ENCODE measurements at regions of chr14 and their contacts with region 1.

Region 1: GRCh38 chr14:104708606-104709268 is 15.3 kb upstream of the ADSS1 start:
- DNase-seq: peak; percentile 80
- H3K4me3 Mint-ChIP-seq: no peak overlapping the region
- H3K27ac Mint-ChIP-seq: no peak overlapping the region
- H3K4me1 Mint-ChIP-seq: peaks cover 2% of the 10 kb centered on the region
- H3K27me3 Mint-ChIP-seq: no peaks in the 10 kb centered on the region

Region 2: DNA sequence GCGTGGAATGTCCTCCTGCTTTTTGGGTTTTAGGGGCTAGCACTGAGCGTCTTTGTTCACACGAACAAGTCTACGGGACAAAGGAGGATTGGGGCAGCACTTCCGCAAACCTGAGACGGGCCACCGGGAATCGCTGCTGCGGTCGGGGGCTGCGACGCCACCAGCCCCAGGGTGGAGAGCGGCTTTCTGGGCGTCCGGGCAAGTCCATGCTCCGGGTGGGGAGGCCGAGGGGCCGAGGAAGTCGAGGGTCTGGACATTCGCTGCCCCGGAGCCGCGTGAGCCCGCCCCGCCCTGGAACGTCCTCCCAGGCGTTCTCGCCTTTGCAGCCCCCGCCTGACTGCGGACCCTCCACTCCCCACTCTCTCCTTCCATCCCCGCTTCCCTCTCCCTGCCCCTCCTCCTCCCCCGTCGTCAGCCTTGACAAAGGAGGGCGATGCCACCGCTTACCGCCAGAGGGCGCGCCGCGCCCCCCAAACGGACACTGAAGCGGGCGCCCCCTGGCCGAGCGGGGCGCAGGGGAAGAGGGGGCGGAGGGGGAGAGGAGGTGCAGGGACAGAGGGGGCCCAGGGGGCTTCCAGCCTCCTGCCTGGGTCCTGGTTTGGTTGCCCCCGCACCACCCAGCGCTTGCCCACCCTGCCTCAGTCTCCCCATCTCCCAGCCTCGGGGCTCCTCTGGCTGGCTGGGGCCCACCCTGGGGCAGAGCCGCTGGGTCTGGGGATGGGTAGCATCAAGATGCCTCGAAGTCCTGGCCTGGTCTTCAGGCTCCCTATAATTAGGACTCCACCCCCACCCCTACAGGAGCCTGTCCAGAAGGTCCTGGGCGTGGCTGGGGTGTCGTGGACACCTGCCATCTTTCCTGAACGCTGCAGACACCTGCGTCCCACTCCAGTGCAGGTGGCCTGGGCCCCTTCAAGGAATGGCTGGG is 58.4 kb before region 1 on chr14:
- CTCF ChIA-PET with region 1: interaction called, 4 read pairs
- intact Hi-C with region 1: loop called (anchors 1 kb)
- DNase-seq: peak; percentile 74
- H3K4me3 Mint-ChIP-seq: peak overlapping the region; percentile 29
- H3K27ac Mint-ChIP-seq: no peak overlapping the region
- H3K4me1 Mint-ChIP-seq: no peaks in the 10 kb centered on the region
- H3K27me3 Mint-ChIP-seq: peaks cover 3% of the 10 kb centered on the region

Measured in activated naive CD4-positive, alpha-beta T cell treated with anti-CD3 and anti-CD28 coated beads for 36 hours (primary cell).